ENCODE measurements at regions of chr14 and their contacts with region 1.

Region 1: DNA sequence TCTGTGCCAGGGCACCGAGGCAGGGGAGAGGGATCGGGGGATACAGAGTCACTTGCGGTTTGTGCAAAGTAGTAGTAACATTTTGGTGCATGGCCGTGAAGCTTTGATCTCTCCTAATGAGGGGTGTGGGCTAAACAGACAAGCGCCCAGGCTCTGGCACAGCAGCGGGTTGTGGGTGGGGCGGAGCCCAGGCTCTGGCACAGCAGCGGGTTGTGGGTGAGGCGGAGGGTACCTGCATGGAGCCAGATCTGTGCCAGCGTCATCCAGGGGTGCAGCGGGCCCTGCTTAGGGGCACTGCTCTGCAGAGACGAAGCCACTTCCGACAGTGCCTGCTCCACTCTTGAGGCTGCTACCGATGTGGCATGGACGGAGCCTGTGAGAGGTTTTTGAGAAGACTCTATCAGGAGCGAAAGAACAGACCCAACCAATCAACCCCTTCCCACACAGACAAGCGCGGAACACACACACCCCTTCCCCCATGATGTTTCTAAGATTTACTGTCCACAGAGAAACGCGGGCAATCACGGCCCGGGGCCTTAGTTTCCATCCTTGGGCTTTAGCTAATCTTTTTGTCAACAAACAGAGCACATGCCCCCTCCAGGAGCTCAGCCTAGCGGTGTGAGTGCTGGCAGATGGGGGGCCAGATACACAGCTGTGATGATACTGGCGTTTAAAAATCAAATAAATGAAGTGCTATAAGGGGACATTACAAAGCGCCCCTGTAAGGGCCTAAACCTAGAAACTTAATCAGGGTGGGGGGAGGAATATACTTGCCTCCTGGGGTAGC is 196.6 kb downstream of the CALM1 start:
- DNase-seq: no peak

Region 2: DNA sequence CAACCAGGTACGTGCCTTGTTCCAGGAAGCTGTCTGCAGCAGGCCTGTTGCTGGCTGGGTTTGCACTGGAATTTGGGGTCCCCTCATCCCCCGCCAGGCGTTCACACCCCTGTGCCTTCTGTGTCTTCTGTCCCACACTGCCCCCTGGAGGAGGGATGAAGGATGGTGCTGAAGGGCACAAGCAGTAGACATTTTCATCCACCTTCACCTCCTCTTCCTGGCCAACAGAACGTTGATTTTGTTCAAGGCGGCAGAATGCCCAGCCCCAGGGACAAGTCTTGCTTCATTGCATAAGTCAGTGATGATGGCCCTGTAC is 74.5 kb before region 1 on chr14:
- intact Hi-C with region 1: no loop called
- DNase-seq: no peak

Region 3: GRCh38 chr14:90610346-90611040 is 17.0 kb after region 1 on chr14:
- intact Hi-C with region 1: loop called (anchors 1 kb)
- DNase-seq: peak; percentile 50

Region 4: DNA sequence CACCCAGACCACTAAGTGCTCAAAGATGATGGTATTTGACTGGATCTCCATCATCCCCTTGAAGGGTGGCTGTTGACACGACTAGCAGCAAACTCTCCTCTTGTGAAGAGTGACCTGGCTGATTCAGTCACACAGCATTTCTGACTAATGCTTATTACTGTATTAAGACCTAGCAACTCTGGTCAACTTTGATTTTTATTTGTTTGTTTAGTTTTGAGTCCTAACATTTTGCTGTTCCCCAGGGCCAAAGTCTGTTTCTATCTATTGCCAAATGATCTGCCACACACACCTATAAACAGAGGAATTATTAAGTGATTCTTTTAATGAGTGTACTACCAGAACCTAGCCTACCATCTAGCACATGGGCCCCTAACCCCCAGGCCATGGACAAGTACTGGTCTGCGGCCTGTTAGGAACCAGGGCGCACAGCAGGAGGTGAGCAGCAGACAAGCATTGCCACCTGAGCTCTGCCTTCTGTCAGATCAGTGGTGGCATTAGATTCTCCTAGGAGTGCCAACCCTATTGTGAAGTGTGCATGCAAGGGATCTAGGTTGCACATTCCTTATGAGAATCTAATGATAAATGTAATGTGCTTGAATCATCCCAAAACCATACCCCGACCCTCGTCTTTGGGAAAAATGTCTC is 347.0 kb after region 1 on chr14:
- intact Hi-C with region 1: no loop called
- DNase-seq: no peak